Posterior vena cava (tissue), 2 donors: ENCODE measurements at regions of chr3 and their contacts with region 1.

Region 1: GRCh38 chr3:181987736-181988135 is 276.0 kb downstream of the SOX2 start:
- DNase-seq: no peak

Region 2: DNA sequence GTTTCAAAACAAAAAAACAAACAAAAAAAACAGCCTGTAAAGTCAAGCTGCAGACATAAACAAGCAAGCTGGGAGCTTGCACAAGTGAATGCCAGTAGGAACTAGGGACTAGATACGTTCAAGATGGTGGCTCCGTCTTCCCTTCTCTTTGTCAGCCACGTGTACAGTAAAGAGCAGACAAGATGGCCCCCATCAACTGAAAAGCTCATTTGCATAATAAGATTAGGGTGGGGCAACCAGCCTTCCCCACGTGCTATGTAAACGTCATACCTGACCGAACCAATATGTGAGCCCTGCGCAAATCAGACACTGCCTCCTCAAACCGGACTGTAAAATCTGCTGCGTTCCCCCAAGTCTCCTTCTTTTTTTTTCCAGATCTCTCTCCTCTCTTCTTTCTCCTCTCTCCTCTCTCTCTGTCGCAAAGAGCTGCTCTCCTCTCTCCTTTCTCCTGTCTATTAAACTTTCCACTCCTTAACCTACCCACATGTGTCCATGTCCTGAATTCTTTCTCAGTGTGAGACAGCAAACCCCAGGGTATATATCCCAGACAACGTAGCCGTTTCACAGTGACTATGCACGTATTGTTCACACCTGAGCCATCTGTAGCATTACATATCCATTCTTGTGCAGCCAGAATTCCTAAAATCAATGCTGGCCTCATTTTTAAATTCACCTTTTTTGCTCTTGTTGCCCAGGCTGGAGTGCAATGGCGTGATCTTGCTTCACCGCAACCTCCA is 1106.5 kb before region 1 on chr3:
- intact Hi-C with region 1: loop called in 1 of 2 experiments (anchors 5 kb)
- DNase-seq: no peak

Region 3: GRCh38 chr3:182105875-182106274 is 118.1 kb after region 1 on chr3:
- intact Hi-C with region 1: no loop called
- DNase-seq: no peak